ENCODE measurements at regions of chr19 and their contacts with region 1.

Region 1: GRCh38 chr19:35013031-35013819 is 13.1 kb downstream of the GRAMD1A start:
- DNase-seq: peak; percentile 67 to 80
- H3K4me3 ChIP-seq: no peak overlapping the region
- H3K27ac ChIP-seq: peak overlapping the region in 1 of 2 donors; percentile 26
- H3K4me1 ChIP-seq: peaks cover 0 to 8% of the 10 kb centered on the region in 2 donors
- H3K27me3 ChIP-seq: no peaks in the 10 kb centered on the region
- CTCF ChIP-seq: peak; percentile 89 to 94 (median 93)
- POLR2A ChIP-seq: no peak

Region 2: DNA sequence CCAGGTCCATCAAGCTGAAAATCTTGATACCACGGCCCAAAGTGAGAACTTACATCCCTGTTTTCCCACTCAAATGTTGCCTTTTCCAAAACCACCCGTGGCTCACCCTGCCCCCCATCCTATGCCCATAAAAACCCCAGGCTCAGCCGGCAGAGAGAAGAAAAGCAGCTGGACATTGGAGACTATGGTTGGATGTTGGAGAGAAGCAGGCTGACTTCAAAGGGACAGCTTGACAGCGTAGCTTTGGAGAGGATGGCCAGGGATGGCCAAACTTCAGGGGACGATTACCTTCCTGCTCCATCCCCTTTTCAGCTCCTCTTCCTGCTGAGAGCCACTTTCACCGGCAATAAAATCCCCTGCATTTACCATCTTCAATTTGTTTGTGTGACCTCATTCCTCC is 45.7 kb before region 1 on chr19:
- intact Hi-C with region 1: loop called (anchors 2 kb)
- DNase-seq: no peak
- H3K4me3 ChIP-seq: no peak overlapping the region
- H3K27ac ChIP-seq: no peak overlapping the region
- H3K4me1 ChIP-seq: peaks cover 0 to 6% of the 10 kb centered on the region in 2 donors
- H3K27me3 ChIP-seq: no peaks in the 10 kb centered on the region
- CTCF ChIP-seq: no peak
- POLR2A ChIP-seq: no peak

Region 3: DNA sequence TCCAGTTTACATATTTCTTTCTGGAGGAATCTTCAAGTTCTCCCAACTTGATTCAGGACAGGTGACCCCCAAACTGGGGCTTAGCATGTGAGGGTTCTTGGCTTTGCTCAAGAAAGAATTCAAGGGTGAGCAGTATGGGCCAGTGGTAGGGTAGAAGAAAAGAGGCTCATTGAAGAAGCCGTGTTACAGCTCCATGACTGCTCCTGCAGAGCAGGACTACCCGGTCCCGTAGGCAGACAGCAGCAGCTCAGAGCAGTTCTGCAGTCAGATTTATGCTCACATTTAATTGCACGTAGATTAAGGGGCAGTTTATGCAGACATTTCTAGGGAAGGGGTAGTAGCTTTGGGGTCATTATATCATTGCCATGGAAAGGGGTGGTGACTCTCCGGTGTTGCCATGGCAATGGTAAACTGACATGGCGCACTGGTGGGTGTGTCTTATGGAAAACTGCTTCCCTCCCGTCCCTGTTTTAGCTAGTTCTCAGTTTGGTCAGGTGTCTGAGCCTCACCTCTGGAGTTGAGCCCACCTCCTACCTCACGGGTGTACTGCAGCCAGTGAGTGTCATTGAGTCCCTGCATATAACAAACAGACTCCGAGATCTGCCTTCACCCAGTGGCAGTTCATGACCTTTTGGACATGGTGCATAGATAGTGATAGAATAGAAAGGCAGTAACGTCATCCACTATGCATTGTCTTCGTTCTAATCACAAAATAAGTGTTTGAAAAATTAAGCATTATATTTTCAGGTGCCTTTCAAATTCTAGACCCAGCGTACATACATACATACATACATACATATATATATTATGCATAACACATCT is 33.2 kb before region 1 on chr19:
- intact Hi-C with region 1: no loop called
- DNase-seq: no peak
- H3K4me3 ChIP-seq: no peak overlapping the region
- H3K27ac ChIP-seq: no peak overlapping the region
- H3K4me1 ChIP-seq: no peaks in the 10 kb centered on the region
- H3K27me3 ChIP-seq: no peaks in the 10 kb centered on the region
- CTCF ChIP-seq: no peak
- POLR2A ChIP-seq: no peak

Region 4: GRCh38 chr19:35107546-35107945 is 94.3 kb after region 1 on chr19:
- intact Hi-C with region 1: no loop called
- DNase-seq: no peak
- H3K4me3 ChIP-seq: no peak overlapping the region
- H3K27ac ChIP-seq: no peak overlapping the region
- H3K4me1 ChIP-seq: no peaks in the 10 kb centered on the region
- H3K27me3 ChIP-seq: no peaks in the 10 kb centered on the region
- CTCF ChIP-seq: no peak
- POLR2A ChIP-seq: no peak

Measured in uterus (tissue), 4 donors.